A549 (cell line): ENCODE measurements at regions of chr10 and their contacts with region 1.

Region 1: DNA sequence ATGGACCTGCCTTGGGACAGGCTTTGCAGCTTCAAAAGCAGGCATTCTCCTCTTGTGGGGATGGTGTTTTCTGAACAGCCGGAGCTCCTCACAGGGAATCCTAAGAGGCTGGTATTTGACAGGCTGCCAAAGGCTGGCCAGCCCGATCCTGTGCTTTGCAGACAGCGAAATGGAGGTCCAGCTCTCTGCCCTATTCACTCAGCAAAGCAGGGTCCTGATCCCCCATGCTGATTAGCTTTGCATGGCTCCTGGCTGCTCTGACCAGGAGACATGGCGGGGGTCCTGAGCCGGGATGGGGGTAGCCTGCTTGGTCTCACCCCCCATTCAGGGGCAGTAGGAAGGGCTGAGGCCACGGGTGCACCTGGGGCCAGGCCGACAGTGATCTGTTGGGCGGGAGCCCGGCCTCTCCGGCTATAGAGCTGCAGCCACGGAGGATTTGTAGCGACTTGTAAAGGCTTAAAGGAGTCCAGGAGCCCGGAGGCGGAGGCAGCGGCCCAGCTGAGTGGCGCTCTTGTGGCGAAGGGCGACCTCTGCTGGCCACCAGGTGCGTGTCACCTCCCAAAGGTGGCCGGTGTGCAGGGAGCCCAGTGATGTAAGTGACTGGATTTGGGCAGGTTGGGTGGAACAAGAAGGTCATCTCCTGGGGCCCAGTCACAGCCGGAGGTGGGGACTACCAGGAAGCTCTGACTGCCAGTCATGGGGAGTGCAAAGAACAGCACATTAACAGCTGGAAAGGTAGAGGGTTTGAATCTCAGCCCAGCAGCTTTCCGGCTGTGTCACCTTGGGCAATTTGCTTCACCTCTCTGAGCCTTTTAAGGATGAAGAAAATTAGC is 126.5 kb downstream of the ZMIZ1 start:
- DNase-seq: peak; percentile 77 to 88
- ATAC-seq: peak; percentile 77 to 87
- H3K4me3 ChIP-seq: no peak overlapping the region
- H3K27ac ChIP-seq: peak overlapping the region; percentile 75 to 88
- H3K4me1 ChIP-seq: peaks cover 50% of the 10 kb centered on the region
- CTCF ChIP-seq: peak; percentile 93
- EP300 ChIP-seq: no peak
- POLR2A ChIP-seq: no peak
- RAD21 ChIP-seq: peak; percentile 94 to 99

Region 2: GRCh38 chr10:78047314-78047891 is 1147.9 kb before region 1 on chr10:
- CTCF ChIA-PET with region 1: interaction called, 97 read pairs
- POLR2A ChIA-PET with region 1: interaction called, 4 read pairs
- DNase-seq: peak; percentile 70 to 86
- ATAC-seq: peak; percentile 71 to 81
- H3K4me3 ChIP-seq: no peak overlapping the region
- H3K27ac ChIP-seq: peak overlapping the region in 1 of 2 experiments; percentile 57; a peak in 3 of 6 replicates
- H3K4me1 ChIP-seq: no peaks in the 10 kb centered on the region; the same call in 2 of the 3 replicates
- CTCF ChIP-seq: peak; percentile 95
- EP300 ChIP-seq: no peak
- POLR2A ChIP-seq: no peak
- RAD21 ChIP-seq: peak; percentile 96

Region 3: GRCh38 chr10:78966844-78967488 is 228.3 kb before region 1 on chr10:
- CTCF ChIA-PET with region 1: interaction called, 18 read pairs
- POLR2A ChIA-PET with region 1: no interaction called
- DNase-seq: no peak
- ATAC-seq: no peak
- H3K4me3 ChIP-seq: no peak overlapping the region
- H3K27ac ChIP-seq: peak overlapping the region; percentile 81 to 90; a peak in 5 of 6 replicates
- H3K4me1 ChIP-seq: peaks cover 48% of the 10 kb centered on the region
- CTCF ChIP-seq: no peak
- EP300 ChIP-seq: no peak
- POLR2A ChIP-seq: no peak
- RAD21 ChIP-seq: no peak

Region 4: DNA sequence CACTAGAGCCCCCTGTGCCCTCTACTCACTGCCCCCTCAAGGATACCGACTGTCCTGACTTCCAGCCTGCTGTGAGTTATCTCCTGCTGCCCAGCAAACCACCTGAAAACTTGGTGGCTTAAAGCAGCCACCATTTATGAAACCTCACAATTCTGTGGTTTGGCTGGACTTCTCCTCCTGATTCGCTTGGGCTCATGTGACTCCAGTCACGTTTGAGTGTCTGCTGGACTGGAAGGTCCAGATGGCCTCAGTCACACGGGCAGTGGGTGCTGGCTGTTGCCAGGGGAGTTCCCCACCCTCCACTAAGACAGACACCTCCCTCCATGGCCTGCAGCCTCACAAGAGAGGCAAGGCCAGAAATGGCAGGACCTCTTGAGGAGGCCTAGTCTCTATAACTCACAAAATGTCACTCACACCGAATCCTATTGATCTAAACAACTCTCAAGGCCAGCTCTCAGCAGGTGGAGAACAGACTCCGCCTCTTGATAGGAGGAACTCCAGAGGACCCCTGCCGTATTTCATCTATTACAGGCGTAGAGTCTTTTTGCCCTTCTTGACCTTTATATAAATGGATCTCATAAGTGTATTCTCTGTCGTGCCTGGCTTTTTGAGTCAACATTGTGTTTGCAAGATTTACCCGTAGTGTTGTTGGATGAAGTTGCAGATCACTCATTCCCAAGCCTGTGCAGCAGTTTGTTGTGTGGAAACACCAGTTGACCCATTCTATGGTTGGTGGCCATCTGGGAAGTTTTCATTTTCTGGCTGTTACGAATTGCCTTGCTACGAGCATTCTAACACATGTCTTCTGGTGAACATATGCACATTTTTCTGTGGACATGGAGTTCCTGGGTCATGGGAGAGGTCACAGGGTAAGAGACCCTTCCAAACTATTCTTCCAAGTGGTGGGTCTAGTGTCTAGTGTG is 78.2 kb before region 1 on chr10:
- CTCF ChIA-PET with region 1: interaction called, 121 read pairs
- POLR2A ChIA-PET with region 1: no interaction called
- DNase-seq: no peak
- ATAC-seq: no peak
- H3K4me3 ChIP-seq: no peak overlapping the region
- H3K27ac ChIP-seq: peak overlapping the region; percentile 32 to 92; a peak in 3 of 6 replicates
- H3K4me1 ChIP-seq: peaks cover 54% of the 10 kb centered on the region
- CTCF ChIP-seq: no peak
- EP300 ChIP-seq: no peak
- POLR2A ChIP-seq: no peak
- RAD21 ChIP-seq: no peak

Region 5: GRCh38 chr10:79149662-79150443 is 45.5 kb before region 1 on chr10:
- CTCF ChIA-PET with region 1: interaction called, 154 read pairs
- POLR2A ChIA-PET with region 1: interaction called, 10 read pairs
- DNase-seq: peak; percentile 91 to 97
- ATAC-seq: peak; percentile 62 to 82
- H3K4me3 ChIP-seq: no peak overlapping the region
- H3K27ac ChIP-seq: peak overlapping the region; percentile 98 to 99
- H3K4me1 ChIP-seq: peaks cover 99% of the 10 kb centered on the region
- CTCF ChIP-seq: no peak
- EP300 ChIP-seq: peak; percentile 72 to 83; a peak in 2 of 5 replicates
- POLR2A ChIP-seq: 0 out of 2 replicates have a peak, but pooled peaks have one; percentile 8
- RAD21 ChIP-seq: peak in 1 of 2 experiments; percentile 59; a peak in 4 of 5 replicates

Region 6: GRCh38 chr10:79178614-79179163 is 16.6 kb before region 1 on chr10:
- CTCF ChIA-PET with region 1: interaction called, 199 read pairs
- POLR2A ChIA-PET with region 1: interaction called, 3 read pairs
- DNase-seq: no peak
- ATAC-seq: peak; percentile 4 to 28; a peak in 3 of 6 replicates
- H3K4me3 ChIP-seq: no peak overlapping the region
- H3K27ac ChIP-seq: peak overlapping the region; percentile 66 to 90
- H3K4me1 ChIP-seq: peaks cover 100% of the 10 kb centered on the region
- CTCF ChIP-seq: no peak
- EP300 ChIP-seq: no peak
- POLR2A ChIP-seq: no peak
- RAD21 ChIP-seq: no peak

Region 7: GRCh38 chr10:79266543-79267312 is 71.4 kb after region 1 on chr10:
- CTCF ChIA-PET with region 1: no interaction called
- POLR2A ChIA-PET with region 1: no interaction called
- DNase-seq: no peak
- ATAC-seq: no peak
- H3K4me3 ChIP-seq: no peak overlapping the region
- H3K27ac ChIP-seq: peak overlapping the region in 1 of 2 experiments; percentile 18; a peak in 1 of 6 replicates
- H3K4me1 ChIP-seq: no peaks in the 10 kb centered on the region
- CTCF ChIP-seq: no peak
- EP300 ChIP-seq: no peak
- POLR2A ChIP-seq: no peak
- RAD21 ChIP-seq: no peak